ENCODE measurements at regions of chr6 and their contacts with region 1.

Region 1: DNA sequence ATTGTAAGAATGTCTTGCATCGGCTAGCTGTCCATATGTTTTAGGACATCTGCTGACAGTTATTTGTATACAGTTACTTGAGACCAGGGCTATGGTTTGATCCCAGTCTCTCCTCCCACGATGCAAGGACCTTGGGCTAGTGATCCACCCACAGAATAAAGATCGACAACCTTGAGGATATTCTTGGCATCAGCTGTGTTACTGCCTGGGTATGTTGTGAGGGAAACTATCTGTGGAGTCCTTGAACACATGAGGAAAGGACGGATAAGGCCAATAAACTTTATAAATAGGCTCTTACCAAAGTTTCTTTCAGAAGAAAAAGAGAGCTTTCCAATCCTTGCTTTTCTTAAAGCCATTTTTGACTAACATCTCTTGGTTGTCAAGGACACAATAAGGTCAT is 70.8 kb upstream of the HEY2 start:
- DNase-seq: no peak
- ATAC-seq: peak in 3 of 4 donors; percentile 47 to 75 (median 73)
- H3K4me3 ChIP-seq: no peak overlapping the region
- H3K27ac ChIP-seq: no peak overlapping the region
- H3K4me1 ChIP-seq: peaks cover 0 to 3% (median 0%) of the 10 kb centered on the region in 12 donors
- H3K27me3 ChIP-seq: no peaks in the 10 kb centered on the region
- CTCF ChIP-seq: no peak
- POLR2A ChIP-seq: no peak

Region 2: GRCh38 chr6:125742466-125743120 is 64.0 kb after region 1 on chr6:
- intact Hi-C with region 1: loop called in 3 of 10 experiments (anchors 5 kb)
- DNase-seq: no peak
- ATAC-seq: no peak
- H3K4me3 ChIP-seq: peak overlapping the region in 7 of 12 donors; percentile 4 to 46 (median 25)
- H3K27ac ChIP-seq: peak overlapping the region in 9 of 12 donors; percentile 8 to 99 (median 35)
- H3K4me1 ChIP-seq: peaks cover 0 to 47% (median 1%) of the 10 kb centered on the region in 12 donors
- H3K27me3 ChIP-seq: peaks cover 0 to 36% (median 0%) of the 10 kb centered on the region in 9 donors
- CTCF ChIP-seq: no peak
- POLR2A ChIP-seq: no peak